SK-N-SH (cell line): ENCODE measurements at regions of chr7 and their contacts with region 1.

Region 1: GRCh38 chr7:35801392-35802101 is 690 bp downstream of the SEPTIN7 start:
- DNase-seq: peak; percentile 85
- H3K4me3 ChIP-seq: peak overlapping the region; percentile 94 to 99
- H3K27ac ChIP-seq: peak overlapping the region; percentile 97 to 98
- H3K4me1 ChIP-seq: peaks cover 15 to 24% of the 10 kb centered on the region in 2 experiments; a peak in 3 of 4 replicates
- H3K27me3 ChIP-seq: no peaks in the 10 kb centered on the region
- CTCF ChIP-seq: peak; percentile 97
- EP300 ChIP-seq: no peak
- RAD21 ChIP-seq: peak; percentile 70

Region 2: DNA sequence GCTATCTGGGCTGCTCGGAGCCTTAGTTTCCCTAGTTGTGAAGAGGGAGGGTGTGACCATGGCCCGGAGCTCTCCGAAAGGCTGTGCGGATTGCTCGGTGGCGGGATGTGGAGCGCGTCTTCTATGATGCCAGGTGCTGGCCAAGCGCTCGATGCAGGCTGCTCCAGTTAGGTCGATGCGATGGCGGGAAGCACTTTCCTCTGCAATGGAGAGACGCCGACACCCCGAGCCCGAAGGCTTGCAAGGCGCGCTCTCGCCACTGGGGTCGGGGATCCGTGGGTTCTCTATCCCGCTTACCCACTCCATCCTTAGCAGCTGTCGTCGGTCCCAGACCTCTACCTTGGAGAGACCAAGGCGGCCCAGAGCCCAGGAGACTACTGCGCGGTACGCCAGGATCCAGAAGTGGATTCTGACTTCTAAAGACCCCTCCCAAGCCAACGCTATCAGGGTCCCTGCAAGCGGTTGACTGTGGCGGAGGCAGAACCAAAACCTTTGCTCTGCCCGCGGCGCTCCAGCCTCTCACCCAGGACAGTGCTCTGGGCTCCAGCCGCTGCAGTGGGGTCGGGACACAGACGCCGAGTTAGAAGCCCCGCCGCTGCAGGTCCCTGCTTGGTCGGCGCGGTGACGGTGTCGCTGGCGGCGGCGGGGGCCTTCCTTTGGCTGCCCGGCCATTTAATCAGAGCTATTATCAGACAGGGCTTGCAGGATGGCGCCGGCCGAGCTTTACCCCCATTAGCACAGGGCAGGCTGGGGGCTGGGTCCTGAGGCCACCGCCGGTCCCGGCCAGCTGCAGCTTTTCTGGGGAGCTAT is 539.9 kb before region 1 on chr7:
- CTCF ChIA-PET with region 1: no interaction called
- POLR2A ChIA-PET with region 1: no interaction called
- DNase-seq: no peak
- H3K4me3 ChIP-seq: no peak overlapping the region
- H3K27ac ChIP-seq: no peak overlapping the region
- H3K4me1 ChIP-seq: peaks cover 0 to 7% of the 10 kb centered on the region in 2 experiments; a peak in 2 of 4 replicates
- H3K27me3 ChIP-seq: no peaks in the 10 kb centered on the region
- CTCF ChIP-seq: no peak
- EP300 ChIP-seq: no peak
- RAD21 ChIP-seq: no peak

Region 3: GRCh38 chr7:35508623-35509400 is 292.7 kb before region 1 on chr7:
- CTCF ChIA-PET with region 1: no interaction called
- POLR2A ChIA-PET with region 1: no interaction called
- DNase-seq: no peak
- H3K4me3 ChIP-seq: no peak overlapping the region
- H3K27ac ChIP-seq: no peak overlapping the region
- H3K4me1 ChIP-seq: peaks cover 2 to 5% of the 10 kb centered on the region in 2 experiments; a peak in 2 of 4 replicates
- H3K27me3 ChIP-seq: no peaks in the 10 kb centered on the region
- CTCF ChIP-seq: peak; percentile 37
- EP300 ChIP-seq: no peak
- RAD21 ChIP-seq: peak; percentile 28; the same call in 1 of the 2 replicates

Region 4: GRCh38 chr7:35694781-35695472 is 106.6 kb before region 1 on chr7 and contains the start of gene HERPUD2:
- CTCF ChIA-PET with region 1: interaction called, 23 read pairs
- POLR2A ChIA-PET with region 1: interaction called, 27 read pairs
- DNase-seq: peak; percentile 99
- H3K4me3 ChIP-seq: peak within 1 kb of the TSS; percentile 92 to 100
- H3K27ac ChIP-seq: peak within 1 kb of the TSS; percentile 87 to 89
- H3K4me1 ChIP-seq: peaks cover 14 to 37% of the 10 kb centered on the region in 2 experiments; a peak in 3 of 4 replicates
- H3K27me3 ChIP-seq: no peaks in the 10 kb centered on the region
- CTCF ChIP-seq: no peak
- EP300 ChIP-seq: no peak
- RAD21 ChIP-seq: no peak
- polyA plus RNA-seq, gene HERPUD2: 39.2 and 48.3 TPM in 2 replicates

Region 5: DNA sequence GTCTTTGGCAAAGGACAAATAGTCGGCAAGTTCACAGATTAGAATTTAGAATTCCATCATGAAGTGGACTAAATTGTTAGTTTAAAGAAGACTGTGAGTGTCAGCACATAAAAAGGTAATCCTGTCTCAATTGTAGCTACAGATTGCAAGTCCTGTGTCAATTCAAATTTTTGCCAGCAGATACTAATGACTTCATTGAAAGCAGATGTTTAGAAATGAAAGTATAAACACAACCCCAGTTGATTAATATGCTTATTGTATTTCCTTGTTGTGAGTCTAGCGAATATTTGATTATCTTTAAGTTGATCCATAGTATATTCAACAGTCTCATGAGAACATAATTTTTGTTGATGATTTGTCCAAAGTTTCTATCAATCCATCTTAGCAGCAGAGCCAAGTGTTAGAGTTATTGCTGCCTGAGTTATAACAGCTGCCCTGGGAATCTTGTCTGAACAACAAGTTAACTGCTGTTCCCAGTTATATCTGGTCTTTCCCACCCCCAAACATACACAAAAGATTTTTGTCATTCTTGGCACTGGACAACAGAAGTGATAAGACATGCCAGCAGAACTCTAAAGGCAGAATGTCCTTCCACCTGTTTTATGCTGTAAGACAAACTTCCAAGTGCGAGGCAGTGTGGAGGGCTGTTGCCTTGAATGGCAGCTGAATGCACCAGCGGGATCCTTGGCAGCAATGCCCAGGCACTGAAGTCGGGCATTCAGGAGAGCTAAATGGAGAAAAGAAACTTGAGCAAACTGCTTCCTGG is 85.3 kb before region 1 on chr7:
- CTCF ChIA-PET with region 1: interaction called, 176 read pairs
- POLR2A ChIA-PET with region 1: interaction called, 10 read pairs
- DNase-seq: peak; percentile 58
- H3K4me3 ChIP-seq: peak overlapping the region; percentile 38 to 39
- H3K27ac ChIP-seq: peak overlapping the region; percentile 26 to 90; a peak in 3 of 4 replicates
- H3K4me1 ChIP-seq: peaks cover 7 to 20% of the 10 kb centered on the region in 2 experiments; a peak in 2 of 4 replicates
- H3K27me3 ChIP-seq: no peaks in the 10 kb centered on the region
- CTCF ChIP-seq: no peak
- EP300 ChIP-seq: peak in 1 of 2 experiments; percentile 65; a peak in 3 of 4 replicates
- RAD21 ChIP-seq: peak; percentile 10; the same call in 1 of the 2 replicates

Region 6: DNA sequence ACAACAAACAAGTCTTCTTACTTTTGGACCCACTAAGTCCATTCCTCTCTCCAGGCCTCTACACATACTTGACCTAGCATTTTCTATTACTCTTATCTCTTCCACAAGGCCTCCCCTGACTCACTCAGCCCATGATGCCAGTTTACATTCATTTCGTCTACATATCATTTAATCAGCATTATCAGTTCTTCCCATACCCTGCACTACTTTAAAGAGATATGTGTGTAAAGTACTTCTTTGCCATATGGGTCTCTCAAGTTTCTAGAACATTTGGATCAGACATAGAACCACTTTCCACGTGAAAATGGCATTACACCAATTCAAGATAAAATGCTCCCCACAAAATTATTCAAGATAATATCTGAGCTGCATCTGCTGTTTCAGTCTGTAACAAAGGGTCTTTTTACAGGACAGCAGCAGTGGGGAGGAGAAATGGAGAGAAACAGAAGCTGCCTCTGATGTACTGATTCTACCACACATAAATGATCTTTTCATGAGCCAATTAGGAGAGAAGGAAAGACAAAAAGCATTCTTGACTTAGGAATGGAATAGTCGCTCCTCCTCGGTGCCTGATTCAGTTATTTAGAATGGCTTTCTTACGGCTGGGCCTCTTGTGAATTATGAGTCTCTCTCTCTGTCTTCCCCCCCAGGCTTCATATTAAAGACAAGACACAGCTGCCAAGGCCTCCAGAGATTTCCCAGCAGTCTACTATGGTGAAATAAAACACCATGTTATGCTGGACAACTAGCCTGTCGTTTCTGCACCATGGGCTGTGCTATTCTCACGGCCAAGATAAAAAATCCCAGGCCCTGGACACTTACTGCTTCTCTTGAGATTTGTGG is 47.6 kb before region 1 on chr7:
- CTCF ChIA-PET with region 1: interaction called, 21 read pairs
- POLR2A ChIA-PET with region 1: interaction called, 7 read pairs
- DNase-seq: no peak
- H3K4me3 ChIP-seq: 0 out of 4 replicates have a peak overlapping the region, but pooled peaks of 1 of the 2 experiments have one; percentile 0
- H3K27ac ChIP-seq: peak overlapping the region; percentile 78 to 96
- H3K4me1 ChIP-seq: peaks cover 32 to 43% of the 10 kb centered on the region in 2 experiments; a peak in 3 of 4 replicates
- H3K27me3 ChIP-seq: no peaks in the 10 kb centered on the region
- CTCF ChIP-seq: no peak
- EP300 ChIP-seq: peak in 1 of 2 experiments; percentile 43; a peak in 3 of 4 replicates
- RAD21 ChIP-seq: 0 out of 2 replicates have a peak, but pooled peaks have one; percentile 2

Region 7: DNA sequence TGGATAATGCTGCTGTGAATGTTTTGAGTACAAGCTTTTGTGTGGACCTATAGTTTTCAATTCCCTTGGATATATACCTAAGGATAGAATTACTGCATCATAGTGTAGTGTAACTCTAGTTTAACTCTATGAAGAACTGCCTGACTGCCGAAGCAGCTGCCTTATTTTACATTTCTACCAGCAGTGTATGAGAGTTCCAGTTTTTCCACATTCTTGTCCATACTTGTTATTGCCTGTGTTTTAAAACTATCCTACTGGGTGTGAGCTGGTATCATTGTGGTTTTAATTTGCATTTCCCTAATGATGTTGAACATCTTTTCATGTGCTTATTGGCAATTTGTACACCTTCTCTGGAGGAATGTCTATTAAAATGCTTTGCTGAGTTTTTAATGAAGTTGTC is 15.0 kb after region 1 on chr7:
- CTCF ChIA-PET with region 1: interaction called, 29 read pairs
- POLR2A ChIA-PET with region 1: interaction called, 4 read pairs
- DNase-seq: no peak
- H3K4me3 ChIP-seq: no peak overlapping the region
- H3K27ac ChIP-seq: no peak overlapping the region
- H3K4me1 ChIP-seq: peaks cover 0 to 4% of the 10 kb centered on the region in 2 experiments; a peak in 1 of 4 replicates
- H3K27me3 ChIP-seq: no peaks in the 10 kb centered on the region
- CTCF ChIP-seq: no peak
- EP300 ChIP-seq: no peak
- RAD21 ChIP-seq: no peak

Region 8: GRCh38 chr7:35839860-35840854 is 38.6 kb after region 1 on chr7:
- CTCF ChIA-PET with region 1: interaction called, 16 read pairs
- POLR2A ChIA-PET with region 1: interaction called, 3 read pairs
- DNase-seq: no peak
- H3K4me3 ChIP-seq: no peak overlapping the region
- H3K27ac ChIP-seq: peak overlapping the region in 1 of 2 experiments; percentile 9; a peak in 1 of 4 replicates
- H3K4me1 ChIP-seq: peaks cover 7 to 9% of the 10 kb centered on the region in 2 experiments; a peak in 3 of 4 replicates
- H3K27me3 ChIP-seq: no peaks in the 10 kb centered on the region
- CTCF ChIP-seq: peak; percentile 28; the same call in 1 of the 2 replicates
- EP300 ChIP-seq: peak in 1 of 2 experiments; percentile 40; a peak in 1 of 4 replicates
- RAD21 ChIP-seq: no peak

Region 9: GRCh38 chr7:35906191-35906908 is 104.8 kb after region 1 on chr7:
- CTCF ChIA-PET with region 1: interaction called, 23 read pairs
- POLR2A ChIA-PET with region 1: interaction called, 5 read pairs
- DNase-seq: peak; percentile 57
- H3K4me3 ChIP-seq: no peak overlapping the region; a peak in 1 of 4 replicates
- H3K27ac ChIP-seq: peak overlapping the region; percentile 13 to 39; a peak in 3 of 4 replicates
- H3K4me1 ChIP-seq: peaks cover 6 to 24% of the 10 kb centered on the region in 2 experiments; a peak in 2 of 4 replicates
- H3K27me3 ChIP-seq: no peaks in the 10 kb centered on the region
- CTCF ChIP-seq: peak; percentile 99
- EP300 ChIP-seq: no peak; a peak in 1 of 4 replicates
- RAD21 ChIP-seq: peak; percentile 96

Region 10: GRCh38 chr7:37045681-37046179 is 1244.2 kb after region 1 on chr7:
- CTCF ChIA-PET with region 1: no interaction called
- POLR2A ChIA-PET with region 1: no interaction called
- DNase-seq: no peak
- H3K4me3 ChIP-seq: no peak overlapping the region
- H3K27ac ChIP-seq: no peak overlapping the region
- H3K4me1 ChIP-seq: peaks cover 0 to 4% of the 10 kb centered on the region in 2 experiments; a peak in 2 of 4 replicates
- H3K27me3 ChIP-seq: 0 out of 2 replicates have a peak, but pooled peaks cover 4% of the 10 kb centered on the region
- CTCF ChIP-seq: no peak
- EP300 ChIP-seq: no peak
- RAD21 ChIP-seq: no peak